Activated naive CD4-positive, alpha-beta T cell treated with anti-CD3 and anti-CD28 coated beads, Interleukin-2, amount 10 ng/mL, durations not matched to agents 7 days and 5 days (primary cell): ENCODE measurements at regions of chr15 and their contacts with region 1.

Region 1: GRCh38 chr15:31488426-31489204 is 162.0 kb downstream of the KLF13 start:
- DNase-seq: peak; percentile 47
- H3K4me3 Mint-ChIP-seq: no peak overlapping the region
- H3K27ac Mint-ChIP-seq: no peak overlapping the region
- H3K4me1 Mint-ChIP-seq: peaks cover 54% of the 10 kb centered on the region
- H3K27me3 Mint-ChIP-seq: peaks cover 33% of the 10 kb centered on the region

Region 2: DNA sequence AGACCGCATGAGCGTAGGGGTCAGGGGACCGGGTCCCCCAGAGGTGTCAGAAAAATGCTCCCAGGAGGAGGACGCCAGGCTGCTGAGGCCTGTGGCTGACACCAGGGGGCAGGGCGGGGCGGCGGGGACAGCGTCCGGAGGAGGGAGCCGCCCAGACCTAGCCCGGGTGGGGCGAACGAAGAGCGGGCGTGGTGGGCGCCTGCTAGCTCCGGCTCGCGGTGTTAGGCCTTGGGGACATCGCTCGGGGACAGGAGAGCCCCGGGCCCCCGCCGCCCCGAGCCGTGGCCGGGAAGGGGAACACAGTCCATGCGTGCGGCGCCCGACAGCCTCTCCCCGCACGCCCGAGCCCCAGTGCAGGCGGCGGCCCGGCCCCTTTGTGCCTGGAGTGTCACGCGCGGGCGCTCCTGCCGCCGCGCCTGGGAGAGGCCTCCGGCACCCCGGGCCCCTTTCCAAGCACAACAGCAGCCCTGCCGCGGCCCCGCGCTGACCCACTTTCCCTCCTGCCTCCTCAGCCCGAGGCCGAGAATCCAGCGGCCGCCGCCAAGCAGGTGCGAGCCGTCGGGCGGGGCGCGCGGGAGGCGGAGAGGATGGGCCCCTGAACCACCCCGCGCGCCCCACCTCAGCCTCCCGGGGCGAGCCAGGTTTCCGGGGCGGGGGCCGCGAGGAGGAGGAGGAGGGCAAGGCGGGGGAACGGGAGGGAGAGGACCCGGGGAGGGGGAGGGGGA is 273.0 kb before region 1 on chr15:
- CTCF ChIA-PET with region 1: interaction called, 17 read pairs
- DNase-seq: peak; percentile 87
- H3K4me3 Mint-ChIP-seq: peak overlapping the region; percentile 69
- H3K27ac Mint-ChIP-seq: peak overlapping the region; percentile 94
- H3K4me1 Mint-ChIP-seq: peaks cover 65% of the 10 kb centered on the region
- H3K27me3 Mint-ChIP-seq: peaks cover 10% of the 10 kb centered on the region

Region 3: GRCh38 chr15:31365655-31366127 is 122.9 kb before region 1 on chr15:
- CTCF ChIA-PET with region 1: interaction called, 53 read pairs
- DNase-seq: peak; percentile 88
- H3K4me3 Mint-ChIP-seq: peak overlapping the region; percentile 70
- H3K27ac Mint-ChIP-seq: peak overlapping the region; percentile 97
- H3K4me1 Mint-ChIP-seq: peaks cover 100% of the 10 kb centered on the region
- H3K27me3 Mint-ChIP-seq: no peaks in the 10 kb centered on the region

Region 4: DNA sequence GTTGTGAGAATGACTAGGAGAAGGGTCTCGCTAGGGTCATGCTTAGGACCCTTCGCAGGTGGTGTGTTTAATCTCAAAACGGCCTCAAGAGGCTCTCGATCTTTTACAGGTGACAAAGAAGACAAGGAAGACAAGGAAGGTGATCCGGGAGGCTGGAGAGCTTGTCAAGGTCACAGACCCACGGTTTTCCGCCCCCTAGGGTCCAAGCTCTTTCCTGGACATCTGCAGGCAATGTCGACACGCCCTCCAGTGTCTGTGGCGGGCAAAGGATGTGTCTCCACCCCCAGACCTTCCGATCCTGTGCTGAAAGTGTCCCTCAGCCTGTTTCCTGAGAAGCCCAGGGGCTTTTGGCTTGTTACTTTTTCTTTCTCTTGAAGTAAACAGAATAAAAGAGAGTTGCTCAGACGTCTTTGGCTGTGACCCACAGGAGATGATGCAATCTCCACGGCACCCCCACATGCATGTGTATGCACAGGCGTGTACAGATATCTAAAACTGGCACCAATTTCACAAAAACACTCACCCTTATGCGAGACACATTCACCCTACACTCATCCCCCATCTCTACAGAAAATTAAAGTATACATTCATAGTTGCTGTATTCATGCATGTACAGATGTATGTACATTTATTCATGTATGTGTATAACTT is 53.2 kb before region 1 on chr15:
- CTCF ChIA-PET with region 1: interaction called, 208 read pairs
- DNase-seq: peak; percentile 91
- H3K4me3 Mint-ChIP-seq: peak overlapping the region; percentile 71
- H3K27ac Mint-ChIP-seq: peak overlapping the region; percentile 100
- H3K4me1 Mint-ChIP-seq: peaks cover 92% of the 10 kb centered on the region
- H3K27me3 Mint-ChIP-seq: no peaks in the 10 kb centered on the region

Region 5: GRCh38 chr15:31458591-31459399 is 29.8 kb before region 1 on chr15:
- CTCF ChIA-PET with region 1: interaction called, 14 read pairs
- DNase-seq: peak; percentile 14
- H3K4me3 Mint-ChIP-seq: no peak overlapping the region
- H3K27ac Mint-ChIP-seq: no peak overlapping the region
- H3K4me1 Mint-ChIP-seq: peaks cover 25% of the 10 kb centered on the region
- H3K27me3 Mint-ChIP-seq: peaks cover 4% of the 10 kb centered on the region

Region 6: DNA sequence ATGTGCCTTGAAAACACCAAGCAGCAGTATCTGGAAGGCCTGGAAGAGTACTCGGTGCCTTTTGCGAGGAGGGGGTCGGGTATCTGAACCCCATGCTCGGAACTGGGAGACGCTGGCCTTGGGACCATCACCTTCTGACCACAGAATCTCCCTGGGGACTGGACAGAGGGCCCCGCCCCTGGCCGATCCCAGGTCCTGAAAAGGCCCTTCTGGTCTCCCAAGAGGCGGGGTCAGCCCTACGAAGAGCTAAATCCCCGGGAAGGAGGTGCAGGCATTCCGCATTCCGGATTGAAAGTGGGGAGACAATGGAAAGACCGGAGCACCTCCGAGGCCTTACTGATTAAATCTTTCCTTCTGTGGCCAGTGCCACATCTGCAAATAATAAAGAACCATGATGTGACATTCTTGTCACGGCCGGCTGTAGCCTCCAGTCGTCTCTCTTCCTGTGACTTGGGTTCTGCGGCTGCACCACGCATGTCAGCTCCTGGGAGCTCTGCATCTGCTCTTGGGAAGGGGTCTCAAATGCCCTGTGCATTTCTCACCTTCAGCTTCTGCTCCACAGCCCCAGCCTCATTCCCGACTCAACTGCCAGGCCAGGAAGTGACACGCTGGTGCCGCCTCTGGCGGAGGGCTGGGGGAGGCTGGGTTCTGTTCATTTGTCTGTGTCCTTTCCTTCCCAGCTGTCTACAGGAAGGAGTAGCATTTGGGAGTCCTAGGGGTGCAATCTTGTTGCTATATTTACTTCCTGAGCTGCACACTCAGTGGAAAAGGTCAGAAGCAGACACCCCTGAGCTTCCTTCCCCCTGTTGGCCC is 11.5 kb after region 1 on chr15:
- CTCF ChIA-PET with region 1: interaction called, 16 read pairs
- DNase-seq: no peak
- H3K4me3 Mint-ChIP-seq: no peak overlapping the region
- H3K27ac Mint-ChIP-seq: no peak overlapping the region
- H3K4me1 Mint-ChIP-seq: no peaks in the 10 kb centered on the region
- H3K27me3 Mint-ChIP-seq: peaks cover 41% of the 10 kb centered on the region

Region 7: GRCh38 chr15:31513178-31513577 is 24.6 kb after region 1 on chr15:
- CTCF ChIA-PET with region 1: no interaction called
- DNase-seq: no peak
- H3K4me3 Mint-ChIP-seq: no peak overlapping the region
- H3K27ac Mint-ChIP-seq: no peak overlapping the region
- H3K4me1 Mint-ChIP-seq: peaks cover 4% of the 10 kb centered on the region
- H3K27me3 Mint-ChIP-seq: peaks cover 21% of the 10 kb centered on the region

Region 8: DNA sequence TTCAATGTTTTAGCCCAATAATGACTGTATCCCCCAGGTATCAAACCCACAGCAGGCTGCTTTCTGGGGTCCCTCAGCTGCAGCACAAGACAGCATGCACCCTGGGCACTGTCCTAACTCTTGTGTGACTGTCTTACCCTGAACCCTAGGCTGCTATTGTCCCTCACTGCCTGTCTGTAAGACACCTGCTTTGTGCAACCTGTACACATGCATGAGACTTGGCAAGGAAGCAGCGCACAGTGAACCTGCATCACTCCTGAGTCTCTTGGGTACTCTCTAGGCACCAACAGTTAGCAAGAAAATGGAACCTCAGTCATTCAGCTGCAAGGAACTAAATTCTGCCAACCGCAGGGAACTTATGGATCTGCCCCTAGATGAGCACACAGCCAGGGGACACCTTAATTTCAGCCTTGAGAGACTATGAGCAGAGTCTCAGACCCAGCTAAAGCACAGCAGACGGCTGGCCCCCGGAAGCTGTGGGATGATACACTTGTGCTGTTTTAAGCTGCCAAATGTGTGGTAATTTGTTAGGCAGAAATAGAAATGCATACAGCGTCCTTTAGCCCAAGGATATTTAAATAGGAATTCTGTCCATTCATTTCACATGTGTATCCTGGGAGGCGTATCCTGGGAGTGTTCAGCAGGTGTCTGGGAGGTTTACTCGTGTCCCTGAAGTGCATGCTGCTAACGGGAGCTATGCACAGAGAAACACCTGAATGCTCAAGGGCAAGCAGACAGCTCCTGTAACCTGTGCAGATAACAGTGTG is 61.8 kb after region 1 on chr15:
- CTCF ChIA-PET with region 1: no interaction called
- DNase-seq: no peak
- H3K4me3 Mint-ChIP-seq: no peak overlapping the region
- H3K27ac Mint-ChIP-seq: no peak overlapping the region
- H3K4me1 Mint-ChIP-seq: no peaks in the 10 kb centered on the region
- H3K27me3 Mint-ChIP-seq: peaks cover 22% of the 10 kb centered on the region